Heart left ventricle (tissue), 16 donors: ENCODE measurements at regions of chr15 and their contacts with region 1.

Region 1: GRCh38 chr15:72473614-72474465 is at the start of gene ARIH1:
- DNase-seq: peak; percentile 97 to 99 (median 98)
- ATAC-seq: peak; percentile 97 to 98 (median 98)
- H3K4me3 ChIP-seq: peak within 1 kb of the TSS; percentile 55 to 95 (median 81)
- H3K27ac ChIP-seq: peak within 1 kb of the TSS; percentile 95 to 100 (median 99)
- H3K4me1 ChIP-seq: peaks cover 0 to 48% (median 37%) of the 10 kb centered on the region in 12 donors
- H3K27me3 ChIP-seq: no peaks in the 10 kb centered on the region
- CTCF ChIP-seq: peak in 6 of 12 donors; percentile 4 to 35 (median 20)
- POLR2A ChIP-seq: peak; percentile 59 to 98
- total RNA-seq, gene ARIH1: 50.2 to 217 (median 167) TPM

Region 2: DNA sequence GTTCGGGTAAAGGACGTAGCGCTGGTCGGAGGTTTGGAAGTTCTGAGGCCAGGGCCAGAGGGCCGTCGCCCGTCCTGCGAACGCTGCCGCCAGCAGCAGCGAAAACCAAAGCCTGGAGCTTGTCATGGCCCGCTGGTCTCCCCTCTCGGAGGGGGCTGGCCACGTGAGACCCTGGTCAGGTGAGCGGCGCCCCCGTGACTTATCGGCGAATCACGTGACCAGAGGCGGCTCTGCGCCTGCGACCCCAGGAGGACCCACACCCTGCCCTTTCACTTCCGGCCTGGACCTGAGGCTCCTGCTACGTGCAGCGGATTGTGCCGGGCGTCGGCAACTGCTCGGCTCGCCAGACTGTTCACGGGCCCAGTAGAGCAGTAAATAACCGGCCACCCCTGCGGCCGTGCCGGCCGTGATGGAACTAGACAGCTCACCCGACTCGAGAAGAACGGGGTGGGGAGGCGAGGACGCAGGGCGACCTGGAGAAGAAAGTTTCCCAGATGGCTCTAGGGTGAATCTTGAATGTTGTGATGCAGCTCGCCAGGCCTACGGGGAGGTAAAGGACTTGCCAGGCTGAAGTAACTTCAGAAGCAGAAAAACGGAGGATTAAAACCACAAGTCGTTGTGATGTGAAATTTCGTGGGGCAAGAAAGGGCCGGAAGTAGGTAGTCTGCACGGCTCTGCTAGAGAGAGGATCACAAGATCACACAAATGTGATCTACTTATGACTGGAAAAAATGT is 97.8 kb before region 1 on chr15 and contains the start of gene HEXA:
- intact Hi-C with region 1: loop called in 5 of 10 experiments (anchors 2 to 10 kb)
- DNase-seq: peak; percentile 98 to 99 (median 98)
- ATAC-seq: peak; percentile 95 to 97 (median 97)
- H3K4me3 ChIP-seq: peak within 1 kb of the TSS; percentile 57 to 98 (median 83)
- H3K27ac ChIP-seq: peak within 1 kb of the TSS; percentile 53 to 97 (median 91)
- H3K4me1 ChIP-seq: peaks cover 0 to 65% (median 22%) of the 10 kb centered on the region in 12 donors
- H3K27me3 ChIP-seq: no peaks in the 10 kb centered on the region
- CTCF ChIP-seq: no peak
- POLR2A ChIP-seq: peak in 1 of 2 donors; percentile 80
- total RNA-seq, gene HEXA: 40.8 to 181 (median 74.4) TPM

Region 3: DNA sequence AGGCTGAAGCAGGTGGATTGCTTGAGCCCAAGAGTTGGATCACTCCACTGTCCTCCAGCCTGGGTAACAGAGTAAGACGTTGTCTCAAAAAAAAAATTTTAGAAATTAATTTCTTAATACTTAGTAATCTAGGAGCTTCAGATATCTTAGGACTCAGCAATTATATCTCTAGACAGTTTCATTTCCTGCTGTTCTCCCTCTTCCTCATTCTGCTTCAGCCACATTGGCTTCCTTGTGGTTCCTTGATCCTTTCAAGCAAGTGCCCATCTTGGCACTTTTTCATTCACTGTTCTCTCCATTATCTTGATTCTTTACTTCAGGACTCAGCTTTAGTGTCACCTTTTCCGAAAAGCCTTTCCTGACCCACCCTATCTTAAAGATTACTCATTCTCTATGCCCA is 53.3 kb before region 1 on chr15:
- intact Hi-C with region 1: no loop called
- DNase-seq: no peak
- ATAC-seq: no peak
- H3K4me3 ChIP-seq: no peak overlapping the region
- H3K27ac ChIP-seq: no peak overlapping the region
- H3K4me1 ChIP-seq: no peaks in the 10 kb centered on the region
- H3K27me3 ChIP-seq: no peaks in the 10 kb centered on the region
- CTCF ChIP-seq: no peak
- POLR2A ChIP-seq: no peak

Region 4: GRCh38 chr15:72511536-72511935 is 37.7 kb after region 1 on chr15:
- intact Hi-C with region 1: loop called in 1 of 10 experiments (anchors 5 kb)
- DNase-seq: no peak
- ATAC-seq: no peak
- H3K4me3 ChIP-seq: no peak overlapping the region
- H3K27ac ChIP-seq: no peak overlapping the region
- H3K4me1 ChIP-seq: peaks cover 0 to 40% (median 23%) of the 10 kb centered on the region in 12 donors
- H3K27me3 ChIP-seq: no peaks in the 10 kb centered on the region
- CTCF ChIP-seq: no peak
- POLR2A ChIP-seq: no peak

Region 5: GRCh38 chr15:72570059-72570458 is 96.2 kb after region 1 on chr15:
- intact Hi-C with region 1: loop called in 1 of 10 experiments (anchors 10 kb)
- DNase-seq: no peak
- ATAC-seq: no peak
- H3K4me3 ChIP-seq: no peak overlapping the region
- H3K27ac ChIP-seq: no peak overlapping the region
- H3K4me1 ChIP-seq: peaks cover 0 to 8% (median 0%) of the 10 kb centered on the region in 12 donors
- H3K27me3 ChIP-seq: no peaks in the 10 kb centered on the region
- CTCF ChIP-seq: no peak
- POLR2A ChIP-seq: no peak

Region 6: DNA sequence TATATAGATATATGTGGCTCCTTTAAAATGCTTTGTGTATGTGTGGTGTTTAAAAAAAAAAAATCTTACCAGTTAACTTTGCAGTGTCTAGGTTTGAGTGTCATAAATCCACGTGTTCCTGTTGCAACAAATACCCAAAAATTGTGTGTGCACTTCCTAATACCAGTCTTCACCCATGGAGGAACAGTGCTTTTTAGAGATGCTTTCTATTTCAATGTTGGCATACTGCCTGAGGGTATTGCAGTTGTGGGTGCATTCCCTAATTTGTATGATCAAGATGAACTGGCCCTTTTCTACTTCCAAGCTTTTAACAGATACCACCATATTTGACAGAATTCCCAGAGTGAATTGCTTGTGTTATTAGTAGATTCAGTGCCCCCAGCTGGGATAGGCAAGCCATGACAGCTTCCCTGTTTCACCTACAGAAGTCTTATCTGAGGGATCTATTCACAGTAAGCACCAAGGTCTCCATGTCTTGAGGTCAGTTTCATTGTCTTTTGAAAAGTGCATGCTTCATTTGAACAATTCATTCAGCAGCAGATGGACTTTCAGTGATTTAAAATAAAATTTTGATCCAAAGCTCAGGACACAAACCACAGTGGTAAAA is 111.7 kb after region 1 on chr15:
- intact Hi-C with region 1: loop called in 2 of 10 experiments (anchors 10 kb)
- DNase-seq: no peak
- ATAC-seq: no peak
- H3K4me3 ChIP-seq: no peak overlapping the region
- H3K27ac ChIP-seq: no peak overlapping the region
- H3K4me1 ChIP-seq: peaks cover 0 to 13% (median 0%) of the 10 kb centered on the region in 12 donors
- H3K27me3 ChIP-seq: no peaks in the 10 kb centered on the region
- CTCF ChIP-seq: peak in 2 of 12 donors; percentile 9
- POLR2A ChIP-seq: no peak

Region 7: DNA sequence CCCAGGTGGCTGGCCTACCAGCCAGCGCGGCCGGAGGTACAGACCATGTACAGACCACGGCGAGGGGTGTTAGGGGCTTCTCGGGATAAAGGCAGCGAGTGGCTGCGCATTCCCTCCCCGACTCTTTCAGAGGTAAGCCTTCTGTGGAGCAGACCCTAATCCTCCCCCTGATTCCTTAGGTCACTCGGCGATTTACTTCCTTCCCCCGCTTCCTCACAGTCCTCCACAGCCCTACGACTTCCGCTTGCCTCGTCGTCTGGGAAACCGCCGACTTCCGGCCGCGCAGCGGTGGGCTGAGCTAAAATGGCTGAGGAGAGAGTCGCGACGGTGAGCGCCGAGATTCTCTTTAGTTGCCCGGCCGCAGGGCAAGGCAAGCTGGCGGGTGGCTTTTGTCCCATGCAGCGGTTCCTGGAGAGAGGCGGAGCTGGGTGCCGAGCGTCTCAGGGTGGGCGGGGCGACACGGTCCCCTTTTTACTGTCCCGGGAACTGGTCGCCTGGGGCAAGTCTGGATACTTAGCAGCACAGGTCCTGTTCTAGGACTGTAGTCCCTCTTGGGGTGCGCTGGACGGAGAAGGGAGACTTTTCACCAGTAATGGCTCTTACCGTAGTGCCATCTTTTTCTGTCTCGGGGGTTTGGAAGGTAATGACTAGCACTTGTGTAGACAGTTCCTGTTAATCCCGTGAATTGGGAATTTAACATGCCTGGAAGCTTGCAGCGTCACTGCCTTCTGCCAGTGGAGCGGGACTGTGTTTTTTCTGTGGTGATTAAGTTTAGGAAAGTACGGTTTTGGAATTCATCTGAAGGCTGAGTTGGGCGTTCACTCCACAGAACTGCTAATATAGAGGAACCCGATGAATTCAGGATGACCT is 212.3 kb after region 1 on chr15 and contains the starts of genes BBS4 and HIGD2B:
- intact Hi-C with region 1: loop called in 1 of 10 experiments (anchors 10 kb)
- DNase-seq: peak; percentile 87 to 91 (median 89)
- ATAC-seq: peak; percentile 96 to 99 (median 98)
- H3K4me3 ChIP-seq: peak within 1 kb of the TSS; percentile 41 to 91 (median 67)
- H3K27ac ChIP-seq: peak within 1 kb of the TSS; percentile 69 to 96 (median 85)
- H3K4me1 ChIP-seq: peaks cover 0 to 14% (median 8%) of the 10 kb centered on the region in 12 donors
- H3K27me3 ChIP-seq: no peaks in the 10 kb centered on the region
- CTCF ChIP-seq: no peak
- POLR2A ChIP-seq: peak in 1 of 2 donors; percentile 65
- total RNA-seq, gene BBS4: 5.9 to 19.4 (median 13.1) TPM
- total RNA-seq, gene HIGD2B: 0.23 TPM in 1 of 9 donors, not detected in the others

Region 8: DNA sequence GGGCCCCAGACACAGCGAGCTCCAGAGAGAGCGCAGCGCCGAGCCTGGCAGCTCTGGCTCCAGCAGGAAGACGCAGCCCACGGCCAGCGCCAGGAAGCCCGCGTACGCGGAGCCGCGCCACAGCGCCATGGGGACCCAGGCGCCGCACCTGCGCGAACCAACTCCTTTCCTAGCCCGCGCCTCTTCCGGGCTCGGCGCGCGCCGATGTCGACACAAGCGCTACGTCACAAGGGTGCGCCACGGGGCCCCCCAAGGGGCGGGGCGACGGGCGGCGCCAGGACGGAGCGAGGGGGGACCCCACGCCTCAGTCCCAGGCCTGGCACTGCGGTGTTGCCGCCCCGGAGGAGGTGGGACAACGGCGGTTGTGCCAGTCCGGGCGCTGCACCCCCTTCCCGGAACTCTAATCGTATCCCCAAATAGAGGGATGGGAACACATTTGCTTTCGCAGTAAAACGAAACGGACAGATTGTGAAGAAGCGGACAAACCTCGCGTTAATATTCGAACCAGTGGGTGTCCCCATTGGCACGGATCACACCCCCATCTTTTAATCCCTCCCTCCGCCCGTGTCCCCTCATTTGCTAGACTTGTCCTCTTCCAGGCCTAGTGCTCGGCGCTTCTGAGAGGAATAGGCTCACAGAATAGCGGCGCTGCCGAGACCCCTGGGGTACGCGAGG is 309.9 kb after region 1 on chr15 and contains the start of gene ADPGK:
- intact Hi-C with region 1: loop called in 1 of 10 experiments (anchors 5 kb)
- DNase-seq: peak; percentile 91 to 96 (median 92)
- ATAC-seq: peak; percentile 97 to 98 (median 98)
- H3K4me3 ChIP-seq: peak within 1 kb of the TSS; percentile 77 to 100 (median 90)
- H3K27ac ChIP-seq: peak within 1 kb of the TSS; percentile 78 to 98 (median 88)
- H3K4me1 ChIP-seq: peaks cover 0 to 40% (median 23%) of the 10 kb centered on the region in 12 donors
- H3K27me3 ChIP-seq: no peaks in the 10 kb centered on the region
- CTCF ChIP-seq: no peak
- POLR2A ChIP-seq: peak in 1 of 2 donors; percentile 87
- total RNA-seq, gene ADPGK: 7.1 to 31.7 (median 10.4) TPM